Natural killer cell (primary cell): ENCODE measurements at regions of chr1 and their contacts with region 1.

Region 1: GRCh38 chr1:206663832-206664652 is 20.7 kb upstream of the MAPKAPK2 start:
- DNase-seq: peak; percentile 59 to 88
- ATAC-seq: peak; percentile 84 to 92 (median 85)
- H3K4me3 ChIP-seq: no peak overlapping the region
- H3K4me3 Mint-ChIP-seq: peak overlapping the region; percentile 25
- H3K27ac ChIP-seq: no peak overlapping the region
- H3K27ac Mint-ChIP-seq: no peak overlapping the region
- H3K4me1 ChIP-seq: peaks cover 22% of the 10 kb centered on the region
- H3K4me1 Mint-ChIP-seq: peaks cover 22% of the 10 kb centered on the region in 2 donors
- H3K27me3 ChIP-seq: peaks cover 4% of the 10 kb centered on the region
- H3K27me3 Mint-ChIP-seq: peaks cover 11 to 16% of the 10 kb centered on the region in 2 donors
- CTCF ChIP-seq: peak; percentile 94

Region 2: DNA sequence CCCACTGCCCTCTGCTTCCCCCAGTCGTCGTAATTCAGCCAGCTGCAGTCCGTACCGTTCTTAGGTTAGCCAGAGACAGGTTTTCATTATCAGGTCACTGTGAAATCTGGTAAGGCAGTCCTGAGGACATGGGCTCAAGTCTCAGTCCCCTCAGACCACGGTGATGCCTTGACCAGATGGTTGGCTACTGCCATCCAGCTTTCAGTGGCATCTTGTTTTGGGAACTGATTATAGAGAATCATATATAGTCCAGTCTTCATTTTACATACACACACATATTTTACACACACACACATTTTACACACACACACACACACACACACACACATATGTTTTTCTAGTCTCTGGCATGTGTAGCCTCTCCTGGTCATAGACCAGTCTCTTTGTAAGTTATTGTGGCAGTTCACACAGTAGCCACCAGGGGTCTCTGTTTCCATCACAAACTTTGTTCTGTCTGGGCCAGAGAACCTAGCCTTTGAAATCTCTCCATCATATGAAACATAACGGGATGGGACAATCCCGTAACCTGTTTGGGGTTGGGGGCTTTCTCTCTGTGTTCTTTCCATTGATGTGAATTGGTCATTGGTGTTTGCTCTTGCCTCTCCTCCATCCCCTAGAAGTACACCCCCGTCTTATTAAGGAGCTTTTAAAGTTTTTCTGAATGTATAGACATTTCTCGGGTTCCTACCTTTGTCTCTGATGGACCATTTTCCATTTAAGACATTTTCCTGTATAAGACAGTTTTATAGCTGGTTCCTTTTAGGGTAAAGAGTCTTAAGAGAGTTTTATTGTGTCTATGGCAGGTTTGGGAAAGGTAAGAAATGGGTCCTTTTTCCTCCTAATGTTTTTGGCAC is 202.2 kb before region 1 on chr1:
- intact Hi-C with region 1: loop called (anchors 1 kb)
- DNase-seq: peak; percentile 54 to 85
- ATAC-seq: peak; percentile 85 to 97 (median 90)
- H3K4me3 ChIP-seq: no peak overlapping the region
- H3K4me3 Mint-ChIP-seq: no peak overlapping the region
- H3K27ac ChIP-seq: no peak overlapping the region
- H3K27ac Mint-ChIP-seq: peak overlapping the region in 1 of 2 donors; percentile 54
- H3K4me1 ChIP-seq: peaks cover 2% of the 10 kb centered on the region
- H3K4me1 Mint-ChIP-seq: peaks cover 0 to 5% of the 10 kb centered on the region in 2 donors
- H3K27me3 ChIP-seq: no peaks in the 10 kb centered on the region
- H3K27me3 Mint-ChIP-seq: peaks cover 0 to 6% of the 10 kb centered on the region in 2 donors
- CTCF ChIP-seq: peak; percentile 73

Region 3: GRCh38 chr1:206479183-206480125 is 184.6 kb before region 1 on chr1:
- intact Hi-C with region 1: loop called (anchors 1 kb)
- DNase-seq: peak; percentile 47 to 86
- ATAC-seq: peak; percentile 72 to 96 (median 90)
- H3K4me3 ChIP-seq: no peak overlapping the region
- H3K4me3 Mint-ChIP-seq: no peak overlapping the region
- H3K27ac ChIP-seq: no peak overlapping the region
- H3K27ac Mint-ChIP-seq: peak overlapping the region; percentile 3 to 73
- H3K4me1 ChIP-seq: no peaks in the 10 kb centered on the region
- H3K4me1 Mint-ChIP-seq: peaks cover 6 to 7% of the 10 kb centered on the region in 2 donors
- H3K27me3 ChIP-seq: no peaks in the 10 kb centered on the region
- H3K27me3 Mint-ChIP-seq: no peaks in the 10 kb centered on the region
- CTCF ChIP-seq: peak; percentile 68

Region 4: DNA sequence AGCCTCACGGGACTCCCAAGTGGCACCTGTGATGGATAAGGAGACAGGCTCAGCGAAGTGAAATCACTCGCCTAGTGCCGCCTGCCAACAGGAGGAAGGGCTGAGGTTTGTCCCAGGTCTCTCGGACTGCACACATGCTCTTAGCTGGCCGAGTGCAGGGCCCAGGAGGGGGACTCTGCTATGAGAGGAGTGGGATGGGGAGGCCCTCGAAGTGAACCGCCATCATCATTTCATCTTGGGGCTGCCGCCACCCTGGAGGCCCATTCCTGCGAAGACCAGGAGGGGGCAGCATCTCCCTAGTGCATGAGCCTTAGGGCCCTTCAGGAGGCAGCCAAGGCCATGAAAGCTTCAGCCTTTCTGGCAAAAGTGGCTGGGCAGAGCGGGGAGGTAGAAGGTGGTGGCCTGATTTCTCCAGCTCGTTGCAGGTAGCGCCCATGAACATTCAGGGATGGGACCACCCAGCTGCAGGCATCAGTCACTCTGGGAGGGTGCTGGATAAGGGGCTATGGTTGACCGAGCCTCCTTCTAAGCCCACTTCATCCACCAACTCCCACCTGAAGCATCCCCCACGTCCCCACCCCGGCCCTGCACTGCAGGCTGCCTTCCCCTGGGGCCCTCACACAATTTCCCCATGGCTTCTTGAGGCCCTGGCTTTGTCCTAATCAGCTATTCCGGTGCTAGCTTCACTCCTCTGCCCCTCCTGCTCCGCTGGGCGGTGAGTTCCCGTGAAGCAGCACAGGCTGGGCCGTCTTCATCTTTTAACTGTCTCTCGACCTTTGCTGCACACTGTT is 173.9 kb before region 1 on chr1:
- intact Hi-C with region 1: loop called (anchors 1 kb)
- DNase-seq: peak; percentile 64 to 79
- ATAC-seq: peak; percentile 83 to 97 (median 88)
- H3K4me3 ChIP-seq: no peak overlapping the region
- H3K4me3 Mint-ChIP-seq: no peak overlapping the region
- H3K27ac ChIP-seq: no peak overlapping the region
- H3K27ac Mint-ChIP-seq: no peak overlapping the region
- H3K4me1 ChIP-seq: peaks cover 4% of the 10 kb centered on the region
- H3K4me1 Mint-ChIP-seq: peaks cover 7 to 9% of the 10 kb centered on the region in 2 donors
- H3K27me3 ChIP-seq: no peaks in the 10 kb centered on the region
- H3K27me3 Mint-ChIP-seq: no peaks in the 10 kb centered on the region
- CTCF ChIP-seq: peak; percentile 78

Region 5: DNA sequence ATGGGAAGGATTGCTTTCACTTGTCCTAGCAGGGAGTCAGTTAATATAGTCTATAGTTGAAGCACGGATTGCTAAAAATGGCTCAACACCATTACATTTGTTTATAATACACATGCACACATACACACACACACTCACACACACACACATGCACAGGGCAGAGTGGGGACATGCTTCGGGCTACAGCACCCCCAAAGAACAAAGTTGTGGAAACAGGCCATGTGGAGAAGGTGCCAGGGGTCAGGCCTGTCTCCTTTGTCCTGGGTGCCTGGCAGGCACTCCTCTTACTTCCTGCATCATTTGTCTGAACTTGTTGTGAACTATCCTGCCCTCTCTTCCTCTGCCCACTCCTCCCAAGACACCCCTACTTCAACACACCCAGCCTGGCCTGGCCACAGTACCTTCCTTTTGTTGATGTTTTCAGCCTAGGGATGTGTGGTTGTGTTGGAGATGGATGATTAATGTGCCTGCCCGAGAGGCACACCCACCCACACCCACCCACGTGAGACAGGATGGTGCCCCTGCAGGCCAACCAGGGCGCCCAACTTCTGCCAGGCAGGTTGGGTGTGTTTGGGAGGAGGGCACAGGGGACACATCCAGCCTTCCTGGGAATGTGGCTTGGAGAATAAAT is 139.2 kb before region 1 on chr1:
- intact Hi-C with region 1: no loop called
- DNase-seq: no peak
- ATAC-seq: no peak
- H3K4me3 ChIP-seq: no peak overlapping the region
- H3K4me3 Mint-ChIP-seq: no peak overlapping the region
- H3K27ac ChIP-seq: no peak overlapping the region
- H3K27ac Mint-ChIP-seq: no peak overlapping the region
- H3K4me1 ChIP-seq: no peaks in the 10 kb centered on the region
- H3K4me1 Mint-ChIP-seq: peaks cover 0 to 6% of the 10 kb centered on the region in 2 donors
- H3K27me3 ChIP-seq: no peaks in the 10 kb centered on the region
- H3K27me3 Mint-ChIP-seq: no peaks in the 10 kb centered on the region
- CTCF ChIP-seq: no peak

Region 6: DNA sequence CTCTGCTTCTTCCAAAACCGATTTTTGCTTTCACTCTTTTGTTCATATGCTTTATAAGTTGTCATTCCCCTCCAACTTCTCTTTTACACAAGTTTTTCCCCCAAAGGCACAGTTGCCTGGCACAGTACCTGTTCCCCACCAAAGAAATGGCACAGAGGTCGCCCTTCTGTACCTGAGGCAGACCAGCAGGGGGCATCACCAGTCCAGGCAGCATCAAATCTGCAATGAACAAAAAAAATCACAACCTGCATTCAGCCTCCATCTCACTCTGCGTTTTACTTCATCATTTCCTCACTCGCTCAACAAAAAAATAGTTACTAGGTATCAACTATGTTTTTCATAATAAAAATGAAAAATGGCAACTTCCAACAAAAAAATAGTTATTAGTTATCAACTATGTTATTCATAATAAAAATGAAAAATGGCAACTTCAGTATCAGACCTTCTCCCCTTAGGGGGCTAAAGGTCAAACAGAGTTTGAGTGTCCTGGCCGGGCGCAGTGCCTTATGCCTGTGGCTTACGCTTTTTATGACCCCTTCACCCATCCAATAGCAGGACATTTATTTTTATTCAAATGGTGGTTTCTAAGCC is 55.8 kb before region 1 on chr1:
- intact Hi-C with region 1: loop called (anchors 10 kb)
- DNase-seq: peak in 1 of 2 donors; percentile 77
- ATAC-seq: no peak
- H3K4me3 ChIP-seq: no peak overlapping the region
- H3K4me3 Mint-ChIP-seq: no peak overlapping the region
- H3K27ac ChIP-seq: no peak overlapping the region
- H3K27ac Mint-ChIP-seq: no peak overlapping the region
- H3K4me1 ChIP-seq: peaks cover 10% of the 10 kb centered on the region
- H3K4me1 Mint-ChIP-seq: peaks cover 16 to 19% of the 10 kb centered on the region in 2 donors
- H3K27me3 ChIP-seq: no peaks in the 10 kb centered on the region
- H3K27me3 Mint-ChIP-seq: no peaks in the 10 kb centered on the region
- CTCF ChIP-seq: peak; percentile 75

Region 7: GRCh38 chr1:206635080-206635977 is 28.7 kb before region 1 on chr1 and contains the start of gene DYRK3:
- intact Hi-C with region 1: loop called (anchors 1 kb)
- DNase-seq: peak; percentile 78 to 94
- ATAC-seq: peak; percentile 94 to 96 (median 95)
- H3K4me3 ChIP-seq: peak within 1 kb of the TSS; percentile 48
- H3K4me3 Mint-ChIP-seq: peak within 1 kb of the TSS; percentile 92
- H3K27ac ChIP-seq: no peak within 1 kb of the TSS
- H3K27ac Mint-ChIP-seq: peak within 1 kb of the TSS; percentile 56 to 79
- H3K4me1 ChIP-seq: peaks cover 17% of the 10 kb centered on the region
- H3K4me1 Mint-ChIP-seq: peaks cover 10 to 21% of the 10 kb centered on the region in 2 donors
- H3K27me3 ChIP-seq: peaks cover 8% of the 10 kb centered on the region
- H3K27me3 Mint-ChIP-seq: peaks cover 20 to 31% of the 10 kb centered on the region in 2 donors
- CTCF ChIP-seq: no peak
- total RNA-seq, gene DYRK3: 0.16 to 0.66 (median 0.43) TPM